Dorsolateral prefrontal cortex (tissue), 120 donors: ENCODE measurements at regions of chr10 and their contacts with region 1.

Region 1: DNA sequence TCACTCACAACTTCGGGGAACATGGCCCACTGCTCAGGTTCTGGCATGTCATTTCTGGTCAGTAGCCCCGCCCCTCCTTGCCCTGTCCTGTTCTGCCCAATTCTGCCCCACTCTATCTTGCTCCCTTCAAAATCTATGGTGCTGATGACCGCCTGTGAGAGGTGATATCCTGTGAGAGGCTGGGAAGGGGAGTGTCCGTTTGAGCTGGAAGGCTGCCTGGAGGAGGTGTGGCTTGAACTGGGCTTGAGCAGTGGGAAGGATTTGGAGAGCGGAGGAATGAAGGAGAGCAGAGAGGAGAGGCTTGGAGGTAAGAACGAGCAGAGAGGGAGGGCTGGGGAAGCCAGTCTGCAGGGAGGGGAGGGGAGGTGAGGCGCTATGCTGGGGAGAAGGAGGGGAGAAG is 145.3 kb downstream of the RPS24 start:
- DNase-seq: peak in 2 of 10 donors; percentile 30 to 40
- H3K4me3 ChIP-seq: peak overlapping the region in 46 of 59 donors; percentile 1 to 55 (median 34)
- H3K27ac ChIP-seq: peak overlapping the region in 29 of 59 donors; percentile 3 to 94 (median 79)
- H3K27me3 ChIP-seq: no peaks in the 10 kb centered on the region
- CTCF ChIP-seq: no peak

Region 2: GRCh38 chr10:78053211-78053868 is 125.6 kb before region 1 on chr10:
- intact Hi-C with region 1: loop called in 1 of 2 experiments (anchors 10 kb)
- DNase-seq: no peak
- H3K4me3 ChIP-seq: no peak overlapping the region
- H3K27ac ChIP-seq: no peak overlapping the region
- H3K27me3 ChIP-seq: no peaks in the 10 kb centered on the region
- CTCF ChIP-seq: no peak

Region 3: GRCh38 chr10:78263521-78263988 is 84.6 kb after region 1 on chr10:
- intact Hi-C with region 1: loop called in 1 of 2 experiments (anchors 2 kb)
- DNase-seq: peak in 9 of 10 donors; percentile 73 to 93 (median 83)
- H3K4me3 ChIP-seq: peak overlapping the region in 2 of 59 donors; percentile 32 to 35
- H3K27ac ChIP-seq: peak overlapping the region; percentile 2 to 98 (median 90)
- H3K27me3 ChIP-seq: no peaks in the 10 kb centered on the region
- CTCF ChIP-seq: peak in 4 of 56 donors; percentile 9 to 32 (median 16)